Spleen (tissue), 13 donors: ENCODE measurements at regions of chr20 and their contacts with region 1.

Region 1: DNA sequence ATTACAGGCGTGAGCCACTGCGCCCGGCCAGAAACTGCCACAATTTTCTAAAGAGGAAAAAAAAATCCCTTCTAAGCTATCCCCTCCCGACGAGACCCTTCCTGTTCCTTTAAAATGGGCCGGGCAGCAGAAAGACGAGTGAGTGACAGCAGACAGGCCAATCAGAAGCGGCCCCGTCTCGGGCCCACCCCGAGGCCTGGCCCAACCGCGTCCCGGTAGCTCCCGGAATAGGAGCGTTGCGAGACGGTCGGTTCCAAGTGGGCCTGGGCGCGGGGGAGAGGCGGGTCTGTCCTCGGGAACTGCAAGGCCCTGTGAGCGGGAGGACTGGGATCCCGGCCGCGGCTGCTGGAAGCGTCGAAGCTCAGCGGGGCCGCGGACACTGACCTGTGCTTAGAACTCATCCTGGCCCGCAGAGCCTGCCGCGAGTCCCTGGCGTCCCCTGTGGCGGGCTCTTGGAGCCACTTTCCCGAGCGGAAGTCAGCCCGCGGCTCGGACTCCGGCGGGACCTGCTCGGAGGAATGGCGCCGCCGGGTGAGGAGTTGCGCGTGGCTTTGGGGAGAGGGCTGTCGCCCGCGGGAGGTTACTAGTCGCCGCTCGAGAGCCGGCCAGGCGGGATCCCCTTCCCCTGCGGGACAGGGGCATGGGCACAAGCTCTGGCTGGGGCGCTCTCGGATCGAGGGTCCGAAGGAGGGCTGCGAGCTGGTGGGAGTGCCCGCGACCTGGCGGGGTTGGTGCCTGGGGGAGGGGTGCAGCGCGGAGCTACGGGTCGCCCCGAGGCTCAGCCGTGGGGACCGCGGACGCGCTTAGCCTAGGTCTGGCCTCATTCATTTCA is at the starts of genes MROH8 and RPN2:
- DNase-seq: peak; percentile 99
- H3K4me3 ChIP-seq: peak within 1 kb of the TSS; percentile 86 to 98 (median 94)
- H3K27ac ChIP-seq: peak within 1 kb of the TSS; percentile 94 to 99 (median 98)
- H3K4me1 ChIP-seq: peaks cover 28 to 60% (median 48%) of the 10 kb centered on the region in 6 donors
- H3K27me3 ChIP-seq: no peaks in the 10 kb centered on the region
- CTCF ChIP-seq: peak in 2 of 11 experiments; percentile 4 to 24
- POLR2A ChIP-seq: peak in 1 of 3 donors; percentile 77
- total RNA-seq, gene MROH8: 0.97 to 4.0 (median 3.3) TPM
- total RNA-seq, gene RPN2: 118 to 161 (median 131) TPM

Region 2: GRCh38 chr20:37095599-37096414 is 83.2 kb before region 1 on chr20 and contains the start of gene RBL1:
- intact Hi-C with region 1: loop called (anchors 10 kb)
- DNase-seq: peak; percentile 95
- H3K4me3 ChIP-seq: peak within 1 kb of the TSS; percentile 63 to 100 (median 90)
- H3K27ac ChIP-seq: peak within 1 kb of the TSS; percentile 31 to 91 (median 74)
- H3K4me1 ChIP-seq: peaks cover 13 to 45% (median 20%) of the 10 kb centered on the region in 6 donors
- H3K27me3 ChIP-seq: no peaks in the 10 kb centered on the region
- CTCF ChIP-seq: peak in 10 of 11 experiments; percentile 25 to 72 (median 57)
- POLR2A ChIP-seq: peak in 1 of 3 donors; percentile 31
- total RNA-seq, gene RBL1: 8.9 to 18.8 (median 12.1) TPM